GM18951 (cell line): ENCODE measurements at regions of chr6 and their contacts with region 1.

Region 1: DNA sequence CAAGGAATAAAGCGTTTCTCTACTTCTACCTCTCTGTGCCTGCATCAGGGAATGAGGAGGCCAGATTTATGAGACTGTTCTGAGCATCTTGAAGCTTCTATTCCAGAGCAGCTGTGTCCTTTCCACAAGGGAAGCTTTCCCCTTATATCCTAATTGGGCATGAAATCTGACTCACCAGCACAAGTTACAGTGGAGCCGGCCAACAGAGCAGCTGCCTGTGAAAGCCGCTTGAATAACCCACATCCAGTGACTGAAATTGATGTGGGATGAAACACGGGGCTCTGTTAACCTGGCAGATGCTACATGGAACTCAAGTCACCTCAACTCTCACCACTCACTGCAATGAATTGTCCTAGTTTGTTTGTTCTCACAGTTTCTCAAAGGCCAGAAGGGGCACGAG is 400.3 kb downstream of the TFAP2A start:
- POLR2A ChIP-seq: no peak

Region 2: DNA sequence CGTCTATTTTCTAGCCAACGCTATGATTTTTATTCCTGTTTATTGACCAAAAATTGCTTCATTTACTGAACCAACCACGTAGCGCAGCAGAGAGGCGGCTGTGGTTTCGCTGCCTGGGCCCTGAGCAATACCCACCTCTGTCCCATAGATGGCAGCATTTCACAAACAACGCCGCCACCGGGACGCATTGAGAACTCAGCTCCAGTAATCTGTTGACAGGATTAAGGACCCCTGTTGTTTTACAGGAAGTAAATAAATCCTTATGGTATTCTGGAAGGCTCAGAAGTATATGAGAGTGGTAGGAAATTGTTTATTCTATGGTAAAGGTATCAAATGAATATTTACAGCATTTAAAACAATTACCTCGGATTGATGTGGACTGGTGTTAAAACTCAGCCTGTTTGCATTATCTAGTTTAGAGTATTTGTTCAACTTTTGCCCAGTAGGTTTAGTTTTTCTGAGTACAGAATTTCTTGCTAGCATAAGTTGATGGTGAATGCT is 1031.3 kb before region 1 on chr6:
- in situ Hi-C with region 1: loop called (anchors 25 kb)
- POLR2A ChIP-seq: no peak

Region 3: GRCh38 chr6:10205120-10205519 is 190.6 kb after region 1 on chr6:
- in situ Hi-C with region 1: no loop called
- POLR2A ChIP-seq: no peak